ENCODE measurements at regions of chr3 and their contacts with region 1.

Region 1: GRCh38 chr3:120172070-120172469 is 77.8 kb upstream of the GSK3B start:
- DNase-seq: no peak
- H3K4me3 ChIP-seq: no peak overlapping the region
- H3K27me3 ChIP-seq: no peaks in the 10 kb centered on the region
- CTCF ChIP-seq: no peak

Region 2: DNA sequence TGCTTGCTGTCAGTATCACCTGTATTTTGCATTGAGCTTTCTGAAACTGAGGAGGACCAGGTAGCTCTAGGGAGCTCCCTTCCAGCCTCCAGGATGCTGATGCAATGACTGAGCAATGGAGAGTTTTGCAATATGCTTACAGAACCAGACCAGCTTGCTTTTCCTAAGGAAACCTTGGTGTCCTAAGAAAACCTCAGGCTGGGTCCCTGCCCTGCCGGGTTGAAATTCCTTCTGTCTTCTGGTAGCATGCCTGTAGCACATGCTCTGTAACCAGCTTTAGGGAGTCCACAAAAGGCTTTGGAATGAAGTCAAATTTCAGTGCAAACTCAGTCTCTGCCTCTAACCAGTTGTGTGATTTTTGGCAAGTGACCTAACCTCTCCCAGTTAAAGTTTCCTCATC is 12.0 kb before region 1 on chr3:
- CTCF ChIA-PET with region 1: interaction called, 10 read pairs
- POLR2A ChIA-PET with region 1: interaction called, 5 read pairs
- DNase-seq: peak; percentile 100
- H3K4me3 ChIP-seq: no peak overlapping the region
- H3K27me3 ChIP-seq: no peaks in the 10 kb centered on the region
- CTCF ChIP-seq: no peak

Region 3: GRCh38 chr3:120203016-120203415 is 30.9 kb after region 1 on chr3:
- CTCF ChIA-PET with region 1: no interaction called
- POLR2A ChIA-PET with region 1: no interaction called
- DNase-seq: peak; percentile 56
- H3K4me3 ChIP-seq: no peak overlapping the region
- H3K27me3 ChIP-seq: no peaks in the 10 kb centered on the region
- CTCF ChIP-seq: no peak

Region 4: GRCh38 chr3:120399372-120399771 is 227.3 kb after region 1 on chr3:
- CTCF ChIA-PET with region 1: no interaction called
- POLR2A ChIA-PET with region 1: no interaction called
- DNase-seq: no peak
- H3K4me3 ChIP-seq: no peak overlapping the region
- H3K27me3 ChIP-seq: no peaks in the 10 kb centered on the region
- CTCF ChIP-seq: no peak

Measured in BJ (cell line).